ENCODE measurements at regions of chr9 and their contacts with region 1.

Region 1: DNA sequence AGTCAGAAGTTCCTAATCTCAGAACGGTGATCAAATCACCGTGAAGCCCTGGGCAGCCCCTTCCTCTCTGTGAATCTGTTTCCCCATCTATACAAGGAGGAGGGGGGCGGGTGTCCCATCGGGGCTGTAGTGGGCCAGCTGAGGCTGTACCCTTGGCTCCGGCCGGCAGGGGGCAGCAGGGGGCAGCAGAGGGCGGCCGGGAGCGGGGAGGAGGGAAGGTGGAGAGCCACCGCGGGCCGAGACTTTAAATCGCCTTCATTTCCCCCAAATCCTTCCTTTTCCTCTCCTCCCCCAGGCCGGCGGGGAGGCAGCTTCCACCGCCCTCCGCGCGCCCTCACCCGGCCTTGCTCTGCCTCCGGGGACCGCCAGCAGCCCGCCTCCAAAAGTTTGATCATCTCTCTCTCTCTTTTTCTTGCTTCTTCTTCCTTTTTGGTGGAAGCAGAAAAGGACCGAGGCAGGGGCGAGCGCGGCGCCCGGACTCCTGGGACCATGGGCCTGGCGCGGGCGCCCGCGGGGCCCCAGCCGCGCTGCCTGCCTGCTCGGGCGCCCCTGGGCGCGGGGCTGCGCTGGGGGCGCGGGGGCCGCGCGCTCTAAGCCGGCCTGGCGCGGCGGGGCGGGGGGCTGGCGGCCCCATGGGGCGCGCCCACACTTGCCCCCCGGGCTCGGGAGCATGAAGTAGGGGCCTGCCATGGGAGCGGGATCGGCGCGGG is at the start of gene COL27A1:
- DNase-seq: peak; percentile 42
- H3K4me3 ChIP-seq: peak within 1 kb of the TSS; percentile 57
- CTCF ChIP-seq: peak; percentile 85

Region 2: DNA sequence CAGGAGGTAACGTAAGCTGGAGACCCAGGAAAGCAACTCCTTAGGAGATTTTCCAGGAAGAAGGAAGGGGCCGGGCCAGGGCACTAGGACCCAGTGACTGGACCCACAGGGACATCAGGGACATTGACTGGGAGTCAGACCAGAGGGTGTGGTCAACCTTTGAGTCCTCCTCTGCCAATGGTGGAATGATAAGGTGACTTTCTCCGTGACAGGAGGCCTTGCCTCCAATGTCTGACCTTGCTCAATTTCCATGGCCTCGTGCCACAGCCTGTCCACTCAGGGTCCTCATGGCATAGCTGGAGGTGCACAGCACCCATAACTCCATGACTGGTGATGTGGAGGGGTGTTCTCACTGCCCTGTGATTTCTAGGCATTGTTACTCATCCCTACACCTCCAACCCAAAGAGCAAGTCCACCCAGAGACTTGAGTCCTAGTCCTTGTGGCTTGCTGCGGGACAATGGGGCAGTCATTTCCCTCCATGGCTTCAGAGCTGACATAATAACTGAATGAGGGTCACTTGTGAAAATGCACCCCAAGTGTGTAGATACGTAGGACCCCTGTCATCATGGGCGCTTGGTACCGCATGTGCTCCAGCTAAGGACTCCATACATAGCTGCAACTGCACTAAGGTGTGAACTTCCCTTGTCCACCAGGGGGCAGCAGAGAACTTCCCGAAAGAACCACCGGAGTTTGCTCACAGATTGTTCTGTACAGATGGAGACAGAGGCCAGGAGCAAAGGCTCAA is 73.2 kb before region 1 on chr9:
- in situ Hi-C with region 1: no loop called
- DNase-seq: peak; percentile 80
- H3K4me3 ChIP-seq: no peak overlapping the region
- CTCF ChIP-seq: peak; percentile 92

Region 3: GRCh38 chr9:114108016-114108833 is 47.2 kb before region 1 on chr9:
- in situ Hi-C with region 1: loop called (anchors 5 kb)
- DNase-seq: peak; percentile 55
- H3K4me3 ChIP-seq: no peak overlapping the region
- CTCF ChIP-seq: peak; percentile 98

Region 4: GRCh38 chr9:114203410-114204140 is 48.2 kb after region 1 on chr9:
- in situ Hi-C with region 1: loop called (anchors 5 kb)
- DNase-seq: no peak
- H3K4me3 ChIP-seq: no peak overlapping the region
- CTCF ChIP-seq: no peak

Region 5: GRCh38 chr9:114250235-114250568 is 94.8 kb after region 1 on chr9:
- in situ Hi-C with region 1: loop called (anchors 5 kb)
- DNase-seq: peak; percentile 85
- H3K4me3 ChIP-seq: no peak overlapping the region
- CTCF ChIP-seq: no peak

Region 6: DNA sequence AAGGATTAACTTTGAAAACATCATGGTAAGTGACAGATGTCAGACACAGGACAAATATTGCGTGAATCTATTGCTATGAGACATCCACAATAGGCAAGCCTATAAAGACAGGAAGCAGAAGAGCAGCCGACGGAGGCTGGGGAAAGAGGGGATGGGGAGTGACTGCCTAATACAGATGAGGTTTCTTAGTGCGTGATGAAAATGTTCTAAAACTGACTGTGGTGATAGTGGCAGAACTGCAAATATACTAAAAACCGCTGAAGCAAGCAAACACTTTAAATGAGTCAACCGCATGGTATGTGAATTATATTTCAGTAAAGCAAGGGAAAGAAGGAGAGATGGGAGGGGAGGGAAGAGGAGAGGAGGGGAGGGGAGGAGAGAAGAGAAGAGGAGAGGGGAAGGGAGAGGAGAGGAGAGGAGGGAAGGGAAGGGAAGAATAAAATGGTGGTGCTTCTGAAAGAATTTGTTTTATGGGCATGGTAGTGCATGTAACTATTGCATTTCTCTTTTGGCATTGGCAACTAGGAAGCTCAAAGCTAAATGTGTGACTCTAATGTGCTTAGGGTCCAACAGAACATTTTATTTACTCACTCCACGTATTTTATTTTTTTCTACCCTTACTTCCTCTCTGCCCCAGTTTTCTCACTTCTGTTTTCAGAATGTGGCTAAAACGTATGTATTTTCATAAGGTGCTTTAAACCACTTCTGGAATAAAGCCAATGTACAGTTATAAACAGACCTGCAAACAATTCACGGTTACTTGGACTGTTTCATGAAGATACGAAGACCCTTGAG is 211.1 kb after region 1 on chr9:
- in situ Hi-C with region 1: no loop called
- DNase-seq: peak; percentile 80
- H3K4me3 ChIP-seq: no peak overlapping the region
- CTCF ChIP-seq: no peak

Measured in astrocyte of the cerebellum (primary cell).